IMR-90 (cell line): ENCODE measurements at regions of chr12 and their contacts with region 1.

Region 1: DNA sequence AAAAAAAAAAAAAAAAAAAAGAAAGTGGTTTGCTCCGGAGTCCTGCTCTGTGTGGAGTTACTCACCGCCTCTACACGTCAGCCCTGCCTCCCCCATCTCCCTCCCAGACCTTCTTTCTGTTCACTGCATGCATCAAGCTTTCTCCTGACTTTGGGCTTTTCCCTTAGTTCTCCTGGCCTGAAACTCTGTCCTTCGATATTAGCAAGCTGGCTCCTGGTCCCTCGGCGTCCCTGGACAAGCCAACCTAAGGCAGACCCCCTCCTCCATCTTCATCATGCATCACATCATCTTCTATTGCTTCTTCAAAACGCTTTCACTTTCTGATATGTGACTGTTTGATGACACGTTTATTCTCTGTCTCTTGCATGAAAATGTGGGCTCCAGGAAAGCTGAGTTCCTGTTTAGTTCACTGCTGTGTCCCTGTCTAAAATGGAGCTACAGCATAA is 40.6 kb downstream of the SLC15A4 start:
- DNase-seq: peak; percentile 41
- ATAC-seq: peak; percentile 33
- H3K4me3 ChIP-seq: peak overlapping the region; percentile 30; the same call in 1 of the 2 replicates
- H3K27ac ChIP-seq: no peak overlapping the region
- H3K4me1 ChIP-seq: no peaks in the 10 kb centered on the region
- H3K27me3 ChIP-seq: no peaks in the 10 kb centered on the region
- CTCF ChIP-seq: no peak
- POLR2A ChIP-seq: no peak
- RAD21 ChIP-seq: no peak

Region 2: DNA sequence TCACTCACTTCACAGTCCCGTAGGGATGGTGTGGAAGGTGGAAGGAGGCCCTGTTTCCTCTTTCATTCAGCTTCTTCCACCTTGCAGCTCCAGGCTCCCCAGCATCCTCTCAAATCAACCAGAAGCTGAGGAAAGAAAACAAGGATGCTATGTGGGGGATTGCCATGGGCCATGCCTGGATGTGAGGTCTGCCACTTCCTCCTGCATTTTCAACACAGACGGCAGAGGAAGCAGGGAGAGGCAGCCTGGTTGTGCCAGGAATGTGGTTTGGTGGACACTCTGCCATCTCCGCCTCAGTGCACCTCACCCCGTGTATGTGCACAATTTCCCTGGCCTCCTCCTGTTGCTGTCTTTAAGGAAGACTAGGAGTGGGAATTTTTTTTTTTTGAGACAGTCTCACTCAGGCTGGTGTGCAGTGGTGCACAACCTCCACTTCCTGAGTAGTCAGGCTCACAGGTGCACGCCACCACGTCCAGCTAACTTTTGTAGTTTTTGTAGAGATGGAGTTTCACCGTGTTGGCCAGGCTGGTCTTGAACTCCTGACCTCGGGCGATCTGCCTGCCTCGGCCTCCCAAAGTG is 58.6 kb before region 1 on chr12:
- CTCF ChIA-PET with region 1: no interaction called
- POLR2A ChIA-PET with region 1: no interaction called
- dilution Hi-C with region 1: no loop called
- in situ Hi-C with region 1: no loop called
- intact Hi-C with region 1: no loop called
- DNase-seq: no peak
- ATAC-seq: no peak
- H3K4me3 ChIP-seq: no peak overlapping the region
- H3K27ac ChIP-seq: no peak overlapping the region
- H3K4me1 ChIP-seq: no peaks in the 10 kb centered on the region
- H3K27me3 ChIP-seq: no peaks in the 10 kb centered on the region
- CTCF ChIP-seq: no peak
- POLR2A ChIP-seq: no peak
- RAD21 ChIP-seq: no peak

Region 3: DNA sequence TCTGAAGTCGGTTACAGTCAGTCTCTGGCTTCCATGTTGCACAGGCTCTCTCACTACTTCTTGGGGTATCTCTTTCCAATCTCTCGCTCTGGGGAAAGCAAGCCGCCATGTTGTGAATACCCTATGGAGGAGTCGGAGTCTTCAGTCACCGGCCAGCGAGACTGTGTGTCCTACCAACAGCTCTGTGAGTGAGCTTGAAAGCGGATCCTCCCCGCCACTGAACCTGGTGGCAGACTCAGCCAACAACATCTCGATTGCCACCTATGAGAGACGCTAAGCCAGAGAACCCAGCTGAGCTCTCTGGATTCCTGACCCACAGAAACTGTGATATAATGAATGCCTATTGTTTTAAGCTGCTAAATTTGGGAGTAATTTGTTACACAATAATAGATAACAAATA is 10.9 kb before region 1 on chr12:
- CTCF ChIA-PET with region 1: interaction called, 10 read pairs
- POLR2A ChIA-PET with region 1: no interaction called
- dilution Hi-C with region 1: no loop called
- in situ Hi-C with region 1: no loop called
- intact Hi-C with region 1: no loop called
- DNase-seq: no peak
- ATAC-seq: no peak
- H3K4me3 ChIP-seq: no peak overlapping the region
- H3K27ac ChIP-seq: no peak overlapping the region
- H3K4me1 ChIP-seq: no peaks in the 10 kb centered on the region
- H3K27me3 ChIP-seq: no peaks in the 10 kb centered on the region
- CTCF ChIP-seq: no peak
- POLR2A ChIP-seq: no peak
- RAD21 ChIP-seq: no peak

Region 4: GRCh38 chr12:130747867-130748740 is 1965.0 kb after region 1 on chr12:
- CTCF ChIA-PET with region 1: no interaction called
- POLR2A ChIA-PET with region 1: no interaction called
- dilution Hi-C with region 1: no loop called
- in situ Hi-C with region 1: loop called (anchors 25 kb)
- intact Hi-C with region 1: no loop called
- DNase-seq: peak; percentile 43
- ATAC-seq: peak; percentile 99
- H3K4me3 ChIP-seq: no peak overlapping the region
- H3K27ac ChIP-seq: no peak overlapping the region
- H3K4me1 ChIP-seq: no peaks in the 10 kb centered on the region
- H3K27me3 ChIP-seq: no peaks in the 10 kb centered on the region
- CTCF ChIP-seq: peak; percentile 73
- POLR2A ChIP-seq: no peak
- RAD21 ChIP-seq: peak; percentile 68